ENCODE measurements at regions of chr9 and their contacts with region 1.

Region 1: GRCh38 chr9:133335878-133336811 is at the start of gene SURF6:
- DNase-seq: peak; percentile 46 to 93
- H3K4me3 ChIP-seq: peak within 1 kb of the TSS; percentile 80 to 91
- H3K27ac ChIP-seq: peak within 1 kb of the TSS; percentile 50 to 57
- H3K4me1 ChIP-seq: peaks cover 11 to 19% of the 10 kb centered on the region in 2 donors
- H3K27me3 ChIP-seq: no peaks in the 10 kb centered on the region
- CTCF ChIP-seq: no peak
- total RNA-seq, gene SURF6: 5.3 TPM

Region 2: GRCh38 chr9:133030317-133031129 is 305.6 kb before region 1 on chr9 and contains the start of gene GTF3C5:
- intact Hi-C with region 1: loop called (anchors 5 kb)
- DNase-seq: peak; percentile 83 to 97
- H3K4me3 ChIP-seq: peak within 1 kb of the TSS; percentile 86 to 96
- H3K27ac ChIP-seq: peak within 1 kb of the TSS; percentile 85 to 91
- H3K4me1 ChIP-seq: peaks cover 10 to 23% of the 10 kb centered on the region in 2 donors
- H3K27me3 ChIP-seq: no peaks in the 10 kb centered on the region
- CTCF ChIP-seq: no peak
- total RNA-seq, gene GTF3C5: 25.9 TPM

Region 3: GRCh38 chr9:133221177-133221809 is 114.9 kb before region 1 on chr9:
- intact Hi-C with region 1: no loop called
- DNase-seq: no peak
- H3K4me3 ChIP-seq: no peak overlapping the region
- H3K27ac ChIP-seq: no peak overlapping the region
- H3K4me1 ChIP-seq: no peaks in the 10 kb centered on the region
- H3K27me3 ChIP-seq: no peaks in the 10 kb centered on the region
- CTCF ChIP-seq: no peak

Region 4: GRCh38 chr9:133347985-133348717 is 12.0 kb after region 1 on chr9 and contains the starts of genes MED22 and RPL7A:
- intact Hi-C with region 1: loop called (anchors 1 kb)
- DNase-seq: peak; percentile 86 to 97
- H3K4me3 ChIP-seq: peak within 1 kb of the TSS; percentile 69 to 80
- H3K27ac ChIP-seq: peak within 1 kb of the TSS; percentile 86 to 94
- H3K4me1 ChIP-seq: peaks cover 6 to 22% of the 10 kb centered on the region in 2 donors
- H3K27me3 ChIP-seq: no peaks in the 10 kb centered on the region
- CTCF ChIP-seq: peak in 1 of 3 experiments; percentile 9
- total RNA-seq, gene MED22: 52.2 TPM
- total RNA-seq, gene RPL7A: 1,203 TPM

Region 5: GRCh38 chr9:133356391-133357091 is 20.4 kb after region 1 on chr9 and contains the starts of genes SURF1 and SURF2:
- intact Hi-C with region 1: loop called (anchors 1 kb)
- DNase-seq: peak; percentile 52 to 92
- H3K4me3 ChIP-seq: peak within 1 kb of the TSS; percentile 70 to 87
- H3K27ac ChIP-seq: peak within 1 kb of the TSS; percentile 47 to 72
- H3K4me1 ChIP-seq: peaks cover 10 to 16% of the 10 kb centered on the region in 2 donors
- H3K27me3 ChIP-seq: no peaks in the 10 kb centered on the region
- CTCF ChIP-seq: no peak
- total RNA-seq, gene SURF1: 19.9 TPM
- total RNA-seq, gene SURF2: 4.4 TPM

Measured in ascending aorta (tissue), 2 donors.